ENCODE measurements at regions of chr1 and their contacts with region 1.

Region 1: GRCh38 chr1:20212685-20213331 is 26.5 kb upstream of the PLA2G2C start:
- DNase-seq: no peak
- H3K4me3 ChIP-seq: no peak overlapping the region
- CTCF ChIP-seq: peak; percentile 50

Region 2: GRCh38 chr1:20151906-20152598 is 60.8 kb before region 1 on chr1:
- CTCF ChIA-PET with region 1: interaction called, 11 read pairs
- POLR2A ChIA-PET with region 1: no interaction called
- DNase-seq: no peak
- H3K4me3 ChIP-seq: peak overlapping the region; percentile 52
- CTCF ChIP-seq: peak; percentile 94

Region 3: GRCh38 chr1:20223551-20224419 is 11.0 kb after region 1 on chr1:
- CTCF ChIA-PET with region 1: interaction called, 23 read pairs
- POLR2A ChIA-PET with region 1: no interaction called
- DNase-seq: no peak
- H3K4me3 ChIP-seq: no peak overlapping the region
- CTCF ChIP-seq: no peak

Region 4: DNA sequence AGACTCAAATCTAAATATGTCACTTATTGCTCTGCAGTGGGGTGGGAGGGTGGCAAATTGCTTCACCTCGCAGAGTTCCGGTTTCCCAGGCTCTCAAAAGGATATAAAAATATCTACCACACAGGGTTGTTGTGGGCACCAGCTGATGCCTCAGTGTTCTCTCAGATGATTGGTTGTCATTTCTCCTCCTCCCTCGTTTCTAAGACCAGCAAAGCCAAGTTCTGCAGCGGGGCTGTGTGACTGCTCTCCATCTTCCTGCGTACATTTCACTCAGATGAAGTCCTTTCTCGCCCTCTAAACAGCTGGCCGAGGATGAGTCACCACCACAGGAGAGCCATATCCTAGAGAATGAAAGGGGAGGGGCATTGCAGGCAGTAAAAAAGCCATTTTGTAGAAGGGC is 42.9 kb after region 1 on chr1:
- CTCF ChIA-PET with region 1: interaction called, 12 read pairs
- POLR2A ChIA-PET with region 1: no interaction called
- DNase-seq: no peak
- H3K4me3 ChIP-seq: no peak overlapping the region
- CTCF ChIP-seq: no peak

Region 5: DNA sequence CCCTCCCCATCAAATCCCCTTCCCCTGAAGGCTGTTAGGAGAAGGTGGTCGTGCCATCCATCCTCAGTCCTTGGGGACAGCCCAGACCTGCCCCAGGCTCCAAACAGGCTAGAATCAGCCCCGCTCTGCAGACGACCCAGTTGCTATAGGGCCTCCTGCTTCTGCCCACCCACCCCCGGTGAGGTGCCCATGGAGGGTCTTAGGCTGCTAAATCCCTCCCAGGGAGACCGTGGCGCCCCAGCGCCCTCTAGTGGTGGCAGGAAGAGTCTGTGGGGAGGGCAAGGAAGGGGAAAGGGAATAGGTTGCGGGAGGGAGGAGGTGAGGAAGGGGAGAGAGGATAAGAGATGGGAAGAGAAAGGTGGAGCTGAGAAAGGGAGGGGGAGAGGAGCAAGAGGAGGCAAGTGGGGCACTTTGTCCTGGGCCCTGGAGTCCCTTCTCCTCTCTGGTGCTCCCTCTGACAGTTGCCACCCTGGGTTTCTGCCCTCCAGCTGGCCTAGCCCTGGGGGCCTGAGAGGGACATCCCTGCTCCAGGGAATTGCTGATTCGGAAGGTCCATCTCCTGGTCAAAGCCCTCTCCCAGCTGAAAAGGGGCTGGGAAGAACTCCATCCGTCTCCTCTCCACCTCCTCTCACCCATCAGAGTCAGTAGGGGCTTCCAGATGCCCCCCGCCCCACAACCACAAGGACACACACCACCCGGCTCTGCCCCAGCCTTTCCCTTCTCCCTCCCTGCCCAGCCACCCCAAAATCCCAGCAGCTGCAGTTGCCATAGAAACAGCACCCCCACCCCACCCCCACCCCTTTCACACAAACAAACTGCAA is 217.8 kb after region 1 on chr1:
- CTCF ChIA-PET with region 1: interaction called, 26 read pairs
- POLR2A ChIA-PET with region 1: no interaction called
- DNase-seq: no peak
- H3K4me3 ChIP-seq: no peak overlapping the region
- CTCF ChIP-seq: peak; percentile 91

Region 6: GRCh38 chr1:20485527-20486456 is 273.0 kb after region 1 on chr1 and contains the start of gene CAMK2N1:
- CTCF ChIA-PET with region 1: interaction called, 198 read pairs
- POLR2A ChIA-PET with region 1: no interaction called
- DNase-seq: no peak
- H3K4me3 ChIP-seq: peak within 1 kb of the TSS; percentile 70
- CTCF ChIP-seq: no peak